ENCODE measurements at regions of chr16 and their contacts with region 1.

Region 1: GRCh38 chr16:68040507-68041288 is 17.6 kb downstream of the DUS2 start:
- DNase-seq: peak; percentile 81
- H3K4me3 Mint-ChIP-seq: no peak overlapping the region
- H3K27ac Mint-ChIP-seq: no peak overlapping the region
- H3K4me1 Mint-ChIP-seq: no peaks in the 10 kb centered on the region
- H3K27me3 Mint-ChIP-seq: no peaks in the 10 kb centered on the region
- CTCF ChIP-seq: peak; percentile 89

Region 2: DNA sequence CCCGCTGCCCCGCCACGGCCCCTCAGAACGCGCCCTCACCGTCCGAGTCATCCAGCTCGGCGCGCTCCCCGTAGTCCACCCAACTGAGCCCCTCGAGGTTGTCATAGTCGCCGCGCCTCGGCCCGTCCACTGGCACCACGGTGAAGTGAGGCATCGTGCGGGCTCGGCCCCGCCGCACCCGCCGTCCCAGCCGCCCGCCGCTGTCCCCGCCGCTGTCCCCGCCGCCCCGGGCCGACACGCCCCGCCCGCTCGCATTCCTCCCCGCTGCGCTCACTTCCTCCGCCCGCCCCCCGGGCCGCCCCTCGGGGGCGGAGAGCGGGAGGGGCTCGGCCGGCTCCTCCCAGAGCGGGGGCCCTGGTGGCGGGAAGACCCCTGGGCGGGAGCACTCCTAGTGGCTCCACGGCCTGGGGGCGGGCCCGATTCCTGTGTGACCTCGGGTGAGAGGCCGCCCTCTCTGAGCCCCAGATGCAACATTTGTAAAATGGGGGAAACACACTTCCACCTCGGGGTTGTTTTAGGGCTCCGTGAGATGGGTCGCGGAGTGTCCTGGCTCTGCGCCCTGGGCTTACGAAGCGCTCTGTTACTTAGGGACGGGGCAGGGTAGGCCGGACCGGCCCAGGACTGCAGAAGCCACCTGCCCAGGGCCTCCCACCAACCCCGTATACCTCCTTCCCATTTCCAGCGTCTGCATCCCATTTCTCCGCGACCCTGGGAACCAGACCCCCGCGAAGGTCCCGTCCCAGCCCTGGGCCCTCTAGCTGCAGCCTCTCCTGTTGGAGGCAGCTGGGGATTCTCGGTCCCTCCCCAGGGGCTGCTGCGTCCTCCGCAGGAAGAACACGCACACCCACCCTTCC is 72.1 kb before region 1 on chr16 and contains the start of gene SLC12A4:
- CTCF ChIA-PET with region 1: interaction called, 3 read pairs
- POLR2A ChIA-PET with region 1: no interaction called
- intact Hi-C with region 1: loop called (anchors 2 kb)
- DNase-seq: peak; percentile 72
- H3K4me3 Mint-ChIP-seq: peak within 1 kb of the TSS; percentile 82
- H3K27ac Mint-ChIP-seq: peak within 1 kb of the TSS; percentile 77
- H3K4me1 Mint-ChIP-seq: peaks cover 26% of the 10 kb centered on the region
- H3K27me3 Mint-ChIP-seq: no peaks in the 10 kb centered on the region
- CTCF ChIP-seq: no peak
- total RNA-seq, gene SLC12A4: 107 TPM in 2 replicates

Region 3: GRCh38 chr16:67993189-67994039 is 47.3 kb before region 1 on chr16:
- CTCF ChIA-PET with region 1: interaction called, 19 read pairs
- POLR2A ChIA-PET with region 1: interaction called, 4 read pairs
- intact Hi-C with region 1: loop called (anchors 1 kb)
- DNase-seq: peak; percentile 62
- H3K4me3 Mint-ChIP-seq: peak overlapping the region; percentile 53
- H3K27ac Mint-ChIP-seq: peak overlapping the region; percentile 82
- H3K4me1 Mint-ChIP-seq: no peaks in the 10 kb centered on the region
- H3K27me3 Mint-ChIP-seq: no peaks in the 10 kb centered on the region
- CTCF ChIP-seq: peak; percentile 98

Region 4: GRCh38 chr16:68028996-68029395 is 11.7 kb before region 1 on chr16:
- CTCF ChIA-PET with region 1: interaction called, 33 read pairs
- POLR2A ChIA-PET with region 1: interaction called, 5 read pairs
- intact Hi-C with region 1: no loop called
- DNase-seq: no peak
- H3K4me3 Mint-ChIP-seq: no peak overlapping the region
- H3K27ac Mint-ChIP-seq: no peak overlapping the region
- H3K4me1 Mint-ChIP-seq: peaks cover 27% of the 10 kb centered on the region
- H3K27me3 Mint-ChIP-seq: no peaks in the 10 kb centered on the region
- CTCF ChIP-seq: no peak

Region 5: GRCh38 chr16:68190736-68191510 is 150.2 kb after region 1 on chr16:
- CTCF ChIA-PET with region 1: no interaction called
- POLR2A ChIA-PET with region 1: no interaction called
- intact Hi-C with region 1: no loop called
- DNase-seq: no peak
- H3K4me3 Mint-ChIP-seq: no peak overlapping the region
- H3K27ac Mint-ChIP-seq: no peak overlapping the region
- H3K4me1 Mint-ChIP-seq: no peaks in the 10 kb centered on the region
- H3K27me3 Mint-ChIP-seq: no peaks in the 10 kb centered on the region
- CTCF ChIP-seq: no peak

Measured in MCF 10A (cell line).